CD8-positive, alpha-beta T cell (primary cell): ENCODE measurements at regions of chr19 and their contacts with region 1.

Region 1: GRCh38 chr19:46860125-46860845 is 512 bp upstream of the ARHGAP35 start:
- DNase-seq: peak; percentile 82 to 98 (median 93)
- ATAC-seq: peak; percentile 80
- H3K4me3 ChIP-seq: peak overlapping the region; percentile 84 to 91
- H3K4me3 Mint-ChIP-seq: peak overlapping the region; percentile 92
- H3K27ac ChIP-seq: peak overlapping the region; percentile 77 to 87
- H3K27ac Mint-ChIP-seq: peak overlapping the region; percentile 94
- H3K4me1 ChIP-seq: peaks cover 44% of the 10 kb centered on the region
- H3K4me1 Mint-ChIP-seq: peaks cover 17% of the 10 kb centered on the region
- H3K27me3 ChIP-seq: no peaks in the 10 kb centered on the region
- H3K27me3 Mint-ChIP-seq: no peaks in the 10 kb centered on the region
- CTCF ChIP-seq: no peak

Region 2: DNA sequence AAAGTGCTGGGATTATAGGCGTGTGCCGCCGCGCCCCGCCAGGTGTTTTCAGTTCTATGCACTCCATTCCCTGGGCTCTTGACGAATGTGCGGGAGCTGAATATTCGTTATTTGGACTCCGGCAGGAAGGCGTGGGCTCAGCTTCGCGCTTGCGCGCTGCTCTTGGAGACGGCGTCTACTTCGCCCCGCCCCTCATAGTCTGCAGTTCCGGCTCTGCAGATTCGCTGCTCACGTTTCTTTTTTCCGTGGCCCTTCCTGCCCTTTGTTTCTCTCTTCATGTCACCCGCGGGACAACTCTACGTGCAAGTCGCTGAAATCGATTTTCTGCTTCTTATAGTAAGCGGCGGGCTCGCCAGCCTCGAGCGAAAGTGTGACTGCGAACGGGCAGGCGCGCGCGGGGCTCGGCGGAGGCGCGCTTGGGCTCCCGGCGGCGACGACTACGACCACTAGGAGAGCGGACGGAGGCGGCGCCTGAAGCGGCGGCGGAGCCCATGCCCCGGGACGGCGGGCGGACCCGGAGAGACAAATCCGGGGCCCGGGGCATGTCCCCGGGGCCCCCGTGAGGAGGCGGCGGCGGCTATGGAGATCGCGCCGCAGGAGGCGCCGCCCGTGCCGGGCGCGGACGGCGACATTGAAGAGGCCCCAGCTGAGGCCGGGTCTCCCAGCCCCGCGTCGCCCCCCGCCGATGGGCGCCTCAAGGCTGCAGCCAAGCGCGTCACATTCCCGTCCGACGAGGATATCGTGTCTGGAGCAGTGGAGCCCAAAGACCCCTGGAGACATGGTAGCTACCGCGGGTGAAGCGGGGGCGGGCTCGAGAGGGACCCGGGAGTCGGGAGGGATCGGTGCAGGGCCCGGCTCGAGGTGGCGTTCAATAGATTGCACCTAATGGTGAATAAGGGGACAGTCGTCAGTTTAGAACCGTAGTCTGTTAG is 1767.3 kb before region 1 on chr19 and contains the start of gene PPP1R37:
- CTCF ChIA-PET with region 1: no interaction called
- POLR2A ChIA-PET with region 1: no interaction called
- intact Hi-C with region 1: no loop called
- DNase-seq: peak; percentile 76 to 97 (median 92)
- ATAC-seq: peak; percentile 76
- H3K4me3 ChIP-seq: peak within 1 kb of the TSS; percentile 64 to 88
- H3K4me3 Mint-ChIP-seq: peak within 1 kb of the TSS; percentile 93
- H3K27ac ChIP-seq: peak within 1 kb of the TSS; percentile 84 to 96
- H3K27ac Mint-ChIP-seq: peak within 1 kb of the TSS; percentile 97
- H3K4me1 ChIP-seq: peaks cover 51% of the 10 kb centered on the region
- H3K4me1 Mint-ChIP-seq: peaks cover 67% of the 10 kb centered on the region
- H3K27me3 ChIP-seq: no peaks in the 10 kb centered on the region
- H3K27me3 Mint-ChIP-seq: no peaks in the 10 kb centered on the region
- CTCF ChIP-seq: peak; percentile 43
- total RNA-seq, gene PPP1R37: 19.3 to 19.9 TPM

Region 3: GRCh38 chr19:46600384-46601317 is 259.6 kb before region 1 on chr19:
- CTCF ChIA-PET with region 1: no interaction called
- POLR2A ChIA-PET with region 1: no interaction called
- intact Hi-C with region 1: loop called (anchors 5 to 10 kb)
- DNase-seq: peak; percentile 95 to 99 (median 97)
- ATAC-seq: peak; percentile 89
- H3K4me3 ChIP-seq: peak overlapping the region; percentile 88 to 99
- H3K4me3 Mint-ChIP-seq: peak overlapping the region; percentile 96
- H3K27ac ChIP-seq: peak overlapping the region; percentile 100
- H3K27ac Mint-ChIP-seq: peak overlapping the region; percentile 100
- H3K4me1 ChIP-seq: peaks cover 34% of the 10 kb centered on the region
- H3K4me1 Mint-ChIP-seq: peaks cover 38% of the 10 kb centered on the region
- H3K27me3 ChIP-seq: no peaks in the 10 kb centered on the region
- H3K27me3 Mint-ChIP-seq: no peaks in the 10 kb centered on the region
- CTCF ChIP-seq: no peak

Region 4: DNA sequence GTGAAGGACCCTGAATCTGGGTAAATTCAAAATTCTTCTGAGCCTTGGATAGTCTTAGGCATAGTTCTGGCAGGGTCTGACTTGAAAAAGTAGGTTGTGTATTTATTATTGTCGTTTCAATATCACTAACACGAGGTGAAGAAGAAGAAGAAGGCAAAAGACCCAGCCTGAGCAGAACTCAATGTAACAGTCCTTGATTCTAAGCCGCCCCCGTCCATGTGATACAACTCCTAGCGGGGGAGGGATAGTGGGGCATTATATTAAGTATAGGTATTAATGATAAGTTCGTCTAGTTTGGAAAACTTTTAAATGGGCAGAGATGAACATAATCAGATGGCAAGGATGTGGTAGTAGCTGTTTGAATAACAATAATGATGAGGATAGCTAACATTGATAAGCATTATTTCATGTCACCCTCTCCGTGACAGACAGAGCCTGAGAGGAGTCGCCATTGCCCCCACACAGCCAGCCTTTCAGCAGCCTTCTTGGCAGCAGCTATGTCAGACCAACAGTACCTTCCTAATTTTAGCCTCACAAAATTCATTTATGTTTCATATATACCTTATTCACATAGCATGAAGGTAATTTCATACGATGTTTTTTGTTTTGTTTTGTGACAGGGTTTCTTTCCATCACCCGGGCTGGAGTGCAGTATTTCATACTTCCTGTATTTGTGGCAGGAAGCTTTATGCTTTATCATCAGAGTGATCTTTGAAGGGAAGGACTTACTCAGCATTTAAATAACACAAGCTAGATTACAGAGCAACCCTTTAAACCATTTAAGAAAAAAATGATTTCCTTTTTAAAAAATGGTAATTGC is 94.9 kb after region 1 on chr19:
- CTCF ChIA-PET with region 1: interaction called, 4 read pairs
- POLR2A ChIA-PET with region 1: interaction called, 3 read pairs
- intact Hi-C with region 1: loop called in 1 of 2 experiments (anchors 1 kb)
- DNase-seq: peak in 8 of 9 experiments; percentile 11 to 75 (median 42)
- ATAC-seq: peak; percentile 85
- H3K4me3 ChIP-seq: peak overlapping the region; percentile 33 to 40
- H3K4me3 Mint-ChIP-seq: peak overlapping the region; percentile 80
- H3K27ac ChIP-seq: peak overlapping the region; percentile 38 to 73
- H3K27ac Mint-ChIP-seq: peak overlapping the region; percentile 89
- H3K4me1 ChIP-seq: peaks cover 32% of the 10 kb centered on the region
- H3K4me1 Mint-ChIP-seq: peaks cover 69% of the 10 kb centered on the region
- H3K27me3 ChIP-seq: no peaks in the 10 kb centered on the region
- H3K27me3 Mint-ChIP-seq: no peaks in the 10 kb centered on the region
- CTCF ChIP-seq: no peak

Region 5: GRCh38 chr19:47013041-47013517 is 152.8 kb after region 1 on chr19:
- CTCF ChIA-PET with region 1: interaction called, 16 read pairs
- POLR2A ChIA-PET with region 1: no interaction called
- intact Hi-C with region 1: loop called in 1 of 2 experiments (anchors 1 kb)
- DNase-seq: peak; percentile 41 to 80 (median 65)
- ATAC-seq: peak; percentile 90
- H3K4me3 ChIP-seq: no peak overlapping the region
- H3K4me3 Mint-ChIP-seq: no peak overlapping the region
- H3K27ac ChIP-seq: no peak overlapping the region
- H3K27ac Mint-ChIP-seq: no peak overlapping the region
- H3K4me1 ChIP-seq: no peaks in the 10 kb centered on the region
- H3K4me1 Mint-ChIP-seq: peaks cover 9% of the 10 kb centered on the region
- H3K27me3 ChIP-seq: peaks cover 0 to 5% of the 10 kb centered on the region in 2 experiments
- H3K27me3 Mint-ChIP-seq: peaks cover 11% of the 10 kb centered on the region
- CTCF ChIP-seq: peak; percentile 99

Region 6: DNA sequence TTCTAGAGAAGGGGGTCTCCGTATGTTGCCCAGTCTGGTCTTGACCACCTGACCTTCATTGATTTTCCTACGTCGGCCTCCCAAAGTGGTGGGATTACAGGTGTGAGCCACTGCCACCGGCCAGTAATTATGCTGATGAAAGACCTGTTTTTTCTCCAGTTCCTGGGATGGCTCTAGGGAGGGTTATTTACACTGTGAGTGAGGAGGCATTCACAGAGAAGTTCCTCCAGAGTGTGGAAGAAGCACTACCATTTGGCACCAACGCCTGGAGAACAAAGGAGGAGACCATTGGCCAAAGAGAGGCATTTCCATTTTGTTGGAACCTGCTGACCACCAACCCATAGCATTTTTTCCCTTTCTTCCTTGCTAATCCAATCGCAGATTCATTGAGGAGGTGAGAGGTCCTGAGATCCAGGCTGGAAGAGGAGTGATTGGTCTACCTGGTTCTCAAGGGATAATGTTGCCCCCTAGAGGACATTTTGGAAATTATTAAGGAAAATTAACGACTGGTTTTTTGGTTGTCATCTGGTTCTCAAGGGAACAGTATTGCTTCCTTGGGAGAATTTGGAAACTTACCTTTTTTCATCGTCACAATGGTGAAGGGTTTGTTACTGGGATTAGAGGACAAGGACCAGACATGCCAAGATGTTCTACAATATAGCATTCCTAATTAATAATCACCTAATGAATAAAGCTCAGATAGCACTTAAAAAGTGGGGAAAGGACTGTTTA is 264.8 kb after region 1 on chr19:
- CTCF ChIA-PET with region 1: no interaction called
- POLR2A ChIA-PET with region 1: no interaction called
- intact Hi-C with region 1: loop called in 1 of 2 experiments (anchors 1 kb)
- DNase-seq: peak in 4 of 9 experiments; percentile 11 to 79 (median 64)
- ATAC-seq: peak; percentile 55
- H3K4me3 ChIP-seq: no peak overlapping the region
- H3K4me3 Mint-ChIP-seq: no peak overlapping the region
- H3K27ac ChIP-seq: no peak overlapping the region
- H3K27ac Mint-ChIP-seq: no peak overlapping the region
- H3K4me1 ChIP-seq: peaks cover 2% of the 10 kb centered on the region
- H3K4me1 Mint-ChIP-seq: peaks cover 5% of the 10 kb centered on the region
- H3K27me3 ChIP-seq: no peaks in the 10 kb centered on the region
- H3K27me3 Mint-ChIP-seq: no peaks in the 10 kb centered on the region
- CTCF ChIP-seq: peak; percentile 75